T-cell (primary cell): ENCODE measurements at regions of chr3 and their contacts with region 1.

Region 1: GRCh38 chr3:147030274-147030673 is 376.1 kb downstream of the ZIC4 start:
- DNase-seq: no peak
- ATAC-seq: no peak
- H3K4me3 ChIP-seq: no peak overlapping the region
- H3K4me3 Mint-ChIP-seq: no peak overlapping the region
- H3K27ac ChIP-seq: no peak overlapping the region
- H3K27ac Mint-ChIP-seq: no peak overlapping the region
- H3K4me1 ChIP-seq: no peaks in the 10 kb centered on the region
- H3K4me1 Mint-ChIP-seq: no peaks in the 10 kb centered on the region
- H3K27me3 ChIP-seq: no peaks in the 10 kb centered on the region
- H3K27me3 Mint-ChIP-seq: no peaks in the 10 kb centered on the region

Region 2: DNA sequence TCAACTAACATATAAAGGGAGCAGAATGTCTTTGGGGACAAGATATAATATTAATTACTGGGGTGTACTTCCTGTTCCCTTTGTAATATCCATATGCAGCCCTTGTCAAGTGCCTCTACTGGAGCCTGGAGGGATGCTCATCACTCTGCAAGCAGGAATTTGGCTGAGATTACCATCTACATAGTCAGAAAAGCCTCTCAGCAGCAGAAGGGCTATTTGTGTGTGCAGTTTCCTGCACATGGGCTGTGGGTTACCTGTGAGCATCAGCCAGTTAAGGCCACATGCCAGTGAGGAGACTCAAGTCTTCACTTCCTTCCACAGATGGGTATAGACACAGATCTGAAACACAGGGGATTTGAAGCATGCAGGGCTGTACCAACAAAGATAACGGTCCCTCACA is 147.0 kb before region 1 on chr3:
- CTCF ChIA-PET with region 1: interaction called in 1 of 2 experiments, 11 read pairs
- POLR2A ChIA-PET with region 1: no interaction called
- DNase-seq: no peak
- ATAC-seq: no peak
- H3K4me3 ChIP-seq: no peak overlapping the region
- H3K4me3 Mint-ChIP-seq: no peak overlapping the region
- H3K27ac ChIP-seq: no peak overlapping the region
- H3K27ac Mint-ChIP-seq: no peak overlapping the region
- H3K4me1 ChIP-seq: no peaks in the 10 kb centered on the region
- H3K4me1 Mint-ChIP-seq: no peaks in the 10 kb centered on the region
- H3K27me3 ChIP-seq: no peaks in the 10 kb centered on the region
- H3K27me3 Mint-ChIP-seq: no peaks in the 10 kb centered on the region

Region 3: DNA sequence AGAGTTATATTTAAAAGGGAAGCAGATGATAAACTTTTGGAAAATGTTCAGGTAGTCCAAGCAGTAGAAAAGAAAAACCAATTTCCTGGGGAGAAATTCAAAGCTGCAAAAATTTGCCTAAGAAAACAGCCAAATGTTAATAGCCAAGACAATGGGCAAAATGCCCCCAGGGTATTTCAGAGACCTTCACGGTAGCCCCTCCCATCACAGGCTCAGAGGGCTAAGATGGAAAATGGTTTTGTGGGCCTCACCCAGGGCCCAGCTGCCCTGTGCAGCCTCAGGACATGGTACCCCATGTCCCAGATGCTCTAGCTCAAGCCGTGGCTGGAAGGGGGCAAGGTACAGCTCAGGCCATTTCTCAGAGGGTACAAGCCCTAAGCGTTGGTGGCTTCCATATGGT is 14.9 kb before region 1 on chr3:
- CTCF ChIA-PET with region 1: no interaction called
- POLR2A ChIA-PET with region 1: no interaction called
- DNase-seq: no peak
- ATAC-seq: no peak
- H3K4me3 ChIP-seq: no peak overlapping the region
- H3K4me3 Mint-ChIP-seq: no peak overlapping the region
- H3K27ac ChIP-seq: no peak overlapping the region
- H3K27ac Mint-ChIP-seq: no peak overlapping the region
- H3K4me1 ChIP-seq: no peaks in the 10 kb centered on the region
- H3K4me1 Mint-ChIP-seq: no peaks in the 10 kb centered on the region
- H3K27me3 ChIP-seq: no peaks in the 10 kb centered on the region
- H3K27me3 Mint-ChIP-seq: no peaks in the 10 kb centered on the region

Region 4: DNA sequence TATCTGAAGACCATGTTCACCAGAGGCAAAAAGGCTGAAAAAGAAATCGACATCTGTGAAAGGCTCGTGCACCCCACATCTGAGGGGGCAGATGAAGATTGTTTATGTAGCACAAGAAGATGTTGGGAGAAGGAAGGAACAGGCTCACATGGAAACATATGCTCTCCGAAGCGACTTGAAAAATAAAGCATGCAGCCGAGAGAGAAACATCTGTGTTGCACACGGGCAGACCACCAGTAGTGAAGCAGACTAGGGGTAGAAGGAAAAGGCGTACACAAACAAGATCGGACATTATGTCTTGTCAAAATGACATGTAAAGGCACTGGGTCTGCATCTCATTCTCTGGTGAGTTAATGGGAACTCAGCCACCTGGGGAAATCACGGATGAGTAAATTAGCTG is 19.5 kb after region 1 on chr3:
- CTCF ChIA-PET with region 1: no interaction called
- POLR2A ChIA-PET with region 1: no interaction called
- DNase-seq: no peak
- ATAC-seq: no peak
- H3K4me3 ChIP-seq: no peak overlapping the region
- H3K4me3 Mint-ChIP-seq: no peak overlapping the region
- H3K27ac ChIP-seq: no peak overlapping the region
- H3K27ac Mint-ChIP-seq: no peak overlapping the region
- H3K4me1 ChIP-seq: no peaks in the 10 kb centered on the region
- H3K4me1 Mint-ChIP-seq: no peaks in the 10 kb centered on the region
- H3K27me3 ChIP-seq: no peaks in the 10 kb centered on the region
- H3K27me3 Mint-ChIP-seq: no peaks in the 10 kb centered on the region